ENCODE measurements at regions of chr5 and their contacts with region 1.

Region 1: DNA sequence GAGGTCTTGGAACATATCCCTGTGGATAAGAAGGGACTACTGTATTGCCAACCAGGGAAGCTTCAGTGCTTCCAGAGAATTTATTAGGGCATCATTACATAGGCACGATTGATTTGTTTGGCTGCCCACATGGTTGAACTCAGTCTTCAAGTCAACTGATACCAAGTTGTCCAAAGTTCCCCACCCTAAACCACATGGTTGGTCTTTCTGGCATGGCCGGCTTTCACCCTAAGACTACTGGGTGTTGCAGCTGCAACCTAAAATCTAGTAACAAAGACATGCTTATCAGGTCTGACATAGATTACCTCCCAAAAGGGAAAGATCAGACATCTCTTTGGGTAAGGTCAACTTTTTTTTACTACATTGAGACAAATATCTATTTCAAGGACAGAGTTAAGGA is 37.0 kb downstream of the FAF2 start:
- DNase-seq: no peak
- ATAC-seq: no peak
- H3K4me3 ChIP-seq: no peak overlapping the region
- H3K4me3 Mint-ChIP-seq: no peak overlapping the region
- H3K27ac ChIP-seq: no peak overlapping the region
- H3K27ac Mint-ChIP-seq: no peak overlapping the region
- H3K4me1 ChIP-seq: peaks cover 7% of the 10 kb centered on the region
- H3K4me1 Mint-ChIP-seq: peaks cover 40% of the 10 kb centered on the region
- H3K27me3 ChIP-seq: no peaks in the 10 kb centered on the region
- H3K27me3 Mint-ChIP-seq: no peaks in the 10 kb centered on the region
- CTCF ChIP-seq: no peak

Region 2: GRCh38 chr5:175579742-175580432 is 905.3 kb before region 1 on chr5:
- CTCF ChIA-PET with region 1: no interaction called
- POLR2A ChIA-PET with region 1: no interaction called
- intact Hi-C with region 1: no loop called
- DNase-seq: no peak
- ATAC-seq: no peak
- H3K4me3 ChIP-seq: no peak overlapping the region
- H3K4me3 Mint-ChIP-seq: no peak overlapping the region
- H3K27ac ChIP-seq: no peak overlapping the region
- H3K27ac Mint-ChIP-seq: no peak overlapping the region
- H3K4me1 ChIP-seq: no peaks in the 10 kb centered on the region
- H3K4me1 Mint-ChIP-seq: no peaks in the 10 kb centered on the region
- H3K27me3 ChIP-seq: no peaks in the 10 kb centered on the region
- H3K27me3 Mint-ChIP-seq: peaks cover 4% of the 10 kb centered on the region
- CTCF ChIP-seq: no peak

Region 3: GRCh38 chr5:176501333-176501732 is 16.2 kb after region 1 on chr5:
- CTCF ChIA-PET with region 1: no interaction called
- POLR2A ChIA-PET with region 1: no interaction called
- intact Hi-C with region 1: loop called in 1 of 2 experiments (anchors 1 kb)
- DNase-seq: no peak
- ATAC-seq: no peak
- H3K4me3 ChIP-seq: no peak overlapping the region
- H3K4me3 Mint-ChIP-seq: no peak overlapping the region
- H3K27ac ChIP-seq: no peak overlapping the region
- H3K27ac Mint-ChIP-seq: no peak overlapping the region
- H3K4me1 ChIP-seq: no peaks in the 10 kb centered on the region
- H3K4me1 Mint-ChIP-seq: peaks cover 1% of the 10 kb centered on the region
- H3K27me3 ChIP-seq: no peaks in the 10 kb centered on the region
- H3K27me3 Mint-ChIP-seq: no peaks in the 10 kb centered on the region
- CTCF ChIP-seq: no peak

Measured in CD8-positive, alpha-beta T cell (primary cell).